Transverse colon (tissue), 4 donors: ENCODE measurements at regions of chr2 and their contacts with region 1.

Region 1: GRCh38 chr2:55419233-55419678 is 400 bp downstream of the CCDC88A start:
- DNase-seq: peak; percentile 24
- H3K4me3 ChIP-seq: peak overlapping the region; percentile 63 to 75 (median 68)
- H3K27ac ChIP-seq: peak overlapping the region; percentile 83 to 92 (median 90)
- H3K4me1 ChIP-seq: peaks cover 2 to 18% (median 11%) of the 10 kb centered on the region in 4 donors
- H3K27me3 ChIP-seq: no peaks in the 10 kb centered on the region
- CTCF ChIP-seq: no peak
- EP300 ChIP-seq: no peak
- POLR2A ChIP-seq: no peak

Region 2: GRCh38 chr2:54471221-54471711 is 948.0 kb before region 1 on chr2:
- in situ Hi-C with region 1: no loop called
- intact Hi-C with region 1: loop called (anchors 5 kb)
- DNase-seq: no peak
- H3K4me3 ChIP-seq: no peak overlapping the region
- H3K27ac ChIP-seq: peak overlapping the region; percentile 1 to 38 (median 27)
- H3K4me1 ChIP-seq: peaks cover 3 to 45% (median 13%) of the 10 kb centered on the region in 4 donors
- H3K27me3 ChIP-seq: no peaks in the 10 kb centered on the region
- CTCF ChIP-seq: no peak
- EP300 ChIP-seq: no peak
- POLR2A ChIP-seq: no peak